Caco-2 (cell line): ENCODE measurements at regions of chr22 and their contacts with region 1.

Region 1: DNA sequence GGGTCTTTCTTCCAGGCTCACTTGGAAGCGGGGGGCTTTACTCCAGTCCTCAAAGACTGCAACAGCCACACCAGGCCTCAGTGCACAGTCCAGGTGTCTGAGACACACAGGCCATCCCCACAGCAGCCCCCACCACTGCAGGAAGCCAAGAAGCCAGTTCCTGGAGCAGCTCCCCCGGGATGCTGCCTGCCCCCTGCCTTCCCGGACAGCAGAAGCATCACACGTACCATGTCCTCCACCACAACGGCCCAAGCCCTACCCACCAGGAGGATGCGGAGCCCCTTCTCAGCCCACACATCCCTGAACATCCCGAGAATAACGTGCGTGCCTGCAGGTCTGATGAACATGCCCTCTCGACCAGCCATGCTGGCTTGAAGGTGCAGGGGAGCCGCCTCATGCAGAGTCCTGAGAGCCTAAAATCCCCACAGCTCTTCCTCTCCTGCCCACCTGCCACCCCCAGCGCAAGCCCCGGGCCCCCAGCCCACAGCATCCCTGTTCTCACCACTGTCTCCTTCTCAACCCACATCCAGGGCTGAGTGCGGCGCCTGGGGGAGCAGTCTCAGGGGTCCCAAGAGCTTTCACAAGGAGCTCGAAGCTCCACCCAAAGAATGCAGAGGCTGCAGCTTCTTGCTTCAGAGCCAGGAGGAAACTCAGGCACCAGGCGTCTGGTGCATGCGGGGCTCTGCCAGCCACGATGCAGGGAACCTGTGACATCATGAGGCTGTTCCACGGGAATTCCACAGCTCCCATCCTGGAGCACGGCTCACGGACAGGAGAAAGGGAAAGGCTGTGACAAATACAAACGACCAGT is 209.6 kb downstream of the BRD1 start:
- DNase-seq: peak in 1 of 2 experiments; percentile 23
- H3K4me3 ChIP-seq: no peak overlapping the region
- H3K4me3 Mint-ChIP-seq: no peak overlapping the region
- H3K27ac Mint-ChIP-seq: no peak overlapping the region
- H3K4me1 ChIP-seq: no peaks in the 10 kb centered on the region
- H3K4me1 Mint-ChIP-seq: no peaks in the 10 kb centered on the region
- H3K27me3 ChIP-seq: no peaks in the 10 kb centered on the region; the same call in 1 of the 2 replicates
- H3K27me3 Mint-ChIP-seq: peaks cover 33% of the 10 kb centered on the region
- CTCF ChIP-seq: no peak

Region 2: GRCh38 chr22:49415151-49415951 is 202.7 kb before region 1 on chr22:
- CTCF ChIA-PET with region 1: no interaction called
- POLR2A ChIA-PET with region 1: no interaction called
- intact Hi-C with region 1: no loop called
- DNase-seq: no peak
- H3K4me3 ChIP-seq: no peak overlapping the region
- H3K4me3 Mint-ChIP-seq: no peak overlapping the region
- H3K27ac Mint-ChIP-seq: no peak overlapping the region
- H3K4me1 ChIP-seq: no peaks in the 10 kb centered on the region
- H3K4me1 Mint-ChIP-seq: no peaks in the 10 kb centered on the region
- H3K27me3 ChIP-seq: no peaks in the 10 kb centered on the region; the same call in 1 of the 2 replicates
- H3K27me3 Mint-ChIP-seq: peaks cover 16% of the 10 kb centered on the region
- CTCF ChIP-seq: no peak

Region 3: GRCh38 chr22:49586244-49586748 is 31.8 kb before region 1 on chr22:
- CTCF ChIA-PET with region 1: no interaction called
- POLR2A ChIA-PET with region 1: no interaction called
- intact Hi-C with region 1: no loop called
- DNase-seq: no peak
- H3K4me3 ChIP-seq: no peak overlapping the region
- H3K4me3 Mint-ChIP-seq: no peak overlapping the region
- H3K27ac Mint-ChIP-seq: no peak overlapping the region
- H3K4me1 ChIP-seq: no peaks in the 10 kb centered on the region
- H3K4me1 Mint-ChIP-seq: no peaks in the 10 kb centered on the region
- H3K27me3 ChIP-seq: no peaks in the 10 kb centered on the region; the same call in 1 of the 2 replicates
- H3K27me3 Mint-ChIP-seq: peaks cover 9% of the 10 kb centered on the region
- CTCF ChIP-seq: no peak

Region 4: GRCh38 chr22:49600891-49601431 is 17.1 kb before region 1 on chr22:
- CTCF ChIA-PET with region 1: no interaction called
- POLR2A ChIA-PET with region 1: interaction called, 10 read pairs
- intact Hi-C with region 1: no loop called
- DNase-seq: peak in 1 of 2 experiments; percentile 7
- H3K4me3 ChIP-seq: no peak overlapping the region
- H3K4me3 Mint-ChIP-seq: no peak overlapping the region
- H3K27ac Mint-ChIP-seq: no peak overlapping the region
- H3K4me1 ChIP-seq: no peaks in the 10 kb centered on the region
- H3K4me1 Mint-ChIP-seq: no peaks in the 10 kb centered on the region
- H3K27me3 ChIP-seq: no peaks in the 10 kb centered on the region
- H3K27me3 Mint-ChIP-seq: no peaks in the 10 kb centered on the region
- CTCF ChIP-seq: no peak